ENCODE measurements at regions of chr6 and their contacts with region 1.

Region 1: GRCh38 chr6:137497721-137498463 is 3.7 kb upstream of the OLIG3 start:
- DNase-seq: peak; percentile 32
- H3K4me3 Mint-ChIP-seq: peak overlapping the region; percentile 52
- H3K27ac Mint-ChIP-seq: no peak overlapping the region
- H3K4me1 Mint-ChIP-seq: peaks cover 46% of the 10 kb centered on the region
- H3K27me3 Mint-ChIP-seq: peaks cover 67% of the 10 kb centered on the region

Region 2: DNA sequence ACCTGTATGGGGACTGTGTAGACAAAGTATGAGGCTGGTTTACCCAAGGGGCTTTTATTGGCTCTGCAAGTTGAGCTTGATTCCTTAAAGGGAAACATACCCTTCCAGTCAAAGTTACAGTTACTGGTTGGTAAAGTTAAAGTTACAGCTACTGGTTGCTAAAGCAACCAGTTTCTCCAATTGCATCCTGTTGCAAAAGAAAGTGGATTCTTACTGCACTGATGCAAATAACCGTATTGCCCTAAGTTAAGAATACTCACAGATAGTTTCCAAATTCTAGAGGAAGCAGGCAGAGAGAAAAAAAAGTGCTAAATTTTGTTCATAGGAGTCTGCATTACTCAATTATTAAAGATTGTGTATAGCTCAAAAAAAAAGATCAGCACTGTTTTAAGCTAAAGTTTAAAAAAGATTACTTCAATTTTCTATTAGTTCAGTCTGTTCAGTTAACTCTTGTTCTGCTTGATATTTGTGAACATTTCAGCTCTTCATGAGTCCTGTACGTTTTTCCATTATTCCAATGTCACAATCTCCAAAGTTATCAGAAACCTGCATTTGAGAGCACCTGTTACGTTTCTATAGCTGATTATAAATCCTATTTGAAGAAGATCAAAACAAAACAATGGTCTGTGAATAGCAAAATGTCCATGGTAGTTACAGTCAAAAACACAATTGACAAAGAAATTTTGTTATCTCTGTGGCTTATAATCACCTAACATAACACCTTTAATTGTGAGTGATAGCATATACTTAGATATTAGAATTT is 315.8 kb before region 1 on chr6:
- CTCF ChIA-PET with region 1: no interaction called
- POLR2A ChIA-PET with region 1: no interaction called
- intact Hi-C with region 1: no loop called
- DNase-seq: no peak
- H3K4me3 Mint-ChIP-seq: no peak overlapping the region
- H3K27ac Mint-ChIP-seq: no peak overlapping the region
- H3K4me1 Mint-ChIP-seq: no peaks in the 10 kb centered on the region
- H3K27me3 Mint-ChIP-seq: peaks cover 3% of the 10 kb centered on the region

Region 3: DNA sequence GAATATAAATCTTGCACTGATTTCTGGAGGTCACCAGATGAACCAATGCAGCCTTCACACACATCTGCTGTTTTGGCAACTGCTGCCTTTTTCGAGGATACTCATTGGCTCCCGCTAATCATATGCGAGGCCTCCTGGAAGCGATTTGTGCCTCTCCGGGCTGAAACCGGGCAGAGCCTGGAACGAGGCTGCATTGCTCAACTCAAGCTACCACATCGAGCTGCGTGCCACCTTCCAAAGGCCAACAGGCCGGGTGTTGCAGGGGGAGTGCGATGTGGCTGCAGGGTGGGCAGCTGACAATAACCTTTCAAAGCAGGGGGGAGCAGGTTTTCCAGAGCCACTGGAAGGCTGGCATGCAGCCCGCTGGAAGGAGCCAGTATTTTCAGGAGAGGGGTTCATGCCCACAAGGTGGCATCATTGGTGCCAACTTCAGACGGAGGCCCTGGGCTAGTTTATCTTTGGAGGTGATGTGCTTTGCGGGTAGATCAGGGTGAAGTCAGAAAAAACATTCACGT is 156.2 kb before region 1 on chr6:
- CTCF ChIA-PET with region 1: no interaction called
- POLR2A ChIA-PET with region 1: no interaction called
- intact Hi-C with region 1: loop called (anchors 10 kb)
- DNase-seq: peak; percentile 66
- H3K4me3 Mint-ChIP-seq: peak overlapping the region; percentile 11
- H3K27ac Mint-ChIP-seq: no peak overlapping the region
- H3K4me1 Mint-ChIP-seq: peaks cover 13% of the 10 kb centered on the region
- H3K27me3 Mint-ChIP-seq: peaks cover 4% of the 10 kb centered on the region

Region 4: DNA sequence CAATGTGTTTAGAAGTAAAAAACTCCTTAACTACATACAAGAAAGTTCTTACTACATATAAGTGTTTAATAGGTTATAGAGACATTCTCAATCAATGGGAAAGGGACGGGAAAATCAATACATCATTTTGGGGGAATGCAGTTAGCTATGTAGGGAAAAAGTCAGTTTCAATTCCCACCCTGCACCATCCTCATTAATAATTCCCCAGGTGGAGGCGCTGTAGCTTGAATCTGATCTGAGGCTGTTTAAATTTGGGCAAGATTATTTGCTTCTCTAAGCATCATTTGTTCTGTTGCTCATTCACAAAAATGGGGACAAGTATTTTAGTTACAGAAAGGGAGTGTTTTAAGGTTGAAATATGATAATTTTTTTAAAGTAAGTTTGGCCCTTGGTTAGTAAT is 22.8 kb before region 1 on chr6:
- CTCF ChIA-PET with region 1: no interaction called
- POLR2A ChIA-PET with region 1: no interaction called
- intact Hi-C with region 1: no loop called
- DNase-seq: no peak
- H3K4me3 Mint-ChIP-seq: no peak overlapping the region
- H3K27ac Mint-ChIP-seq: no peak overlapping the region
- H3K4me1 Mint-ChIP-seq: no peaks in the 10 kb centered on the region
- H3K27me3 Mint-ChIP-seq: peaks cover 8% of the 10 kb centered on the region

Region 5: GRCh38 chr6:137536104-137536773 is 38.3 kb after region 1 on chr6:
- CTCF ChIA-PET with region 1: no interaction called
- POLR2A ChIA-PET with region 1: no interaction called
- intact Hi-C with region 1: no loop called
- DNase-seq: peak; percentile 70
- H3K4me3 Mint-ChIP-seq: no peak overlapping the region
- H3K27ac Mint-ChIP-seq: no peak overlapping the region
- H3K4me1 Mint-ChIP-seq: peaks cover 2% of the 10 kb centered on the region
- H3K27me3 Mint-ChIP-seq: no peaks in the 10 kb centered on the region

Measured in activated CD4-positive, alpha-beta memory T cell treated with anti-CD3 and anti-CD28 coated beads for 36 hours (primary cell).